Activated T-helper 2 cell treated with anti-CD3 and anti-CD28 coated beads, Interferon-gamma antibody, Interleukin-2, Interleukin-4, amounts not matched to agents 10 μg/mL and 5 μg/mL and 100 μg/mL, durations not matched to agents 14 hours and 24 hours and 36 hours (primary cell): ENCODE measurements at regions of chr3 and their contacts with region 1.

Region 1: DNA sequence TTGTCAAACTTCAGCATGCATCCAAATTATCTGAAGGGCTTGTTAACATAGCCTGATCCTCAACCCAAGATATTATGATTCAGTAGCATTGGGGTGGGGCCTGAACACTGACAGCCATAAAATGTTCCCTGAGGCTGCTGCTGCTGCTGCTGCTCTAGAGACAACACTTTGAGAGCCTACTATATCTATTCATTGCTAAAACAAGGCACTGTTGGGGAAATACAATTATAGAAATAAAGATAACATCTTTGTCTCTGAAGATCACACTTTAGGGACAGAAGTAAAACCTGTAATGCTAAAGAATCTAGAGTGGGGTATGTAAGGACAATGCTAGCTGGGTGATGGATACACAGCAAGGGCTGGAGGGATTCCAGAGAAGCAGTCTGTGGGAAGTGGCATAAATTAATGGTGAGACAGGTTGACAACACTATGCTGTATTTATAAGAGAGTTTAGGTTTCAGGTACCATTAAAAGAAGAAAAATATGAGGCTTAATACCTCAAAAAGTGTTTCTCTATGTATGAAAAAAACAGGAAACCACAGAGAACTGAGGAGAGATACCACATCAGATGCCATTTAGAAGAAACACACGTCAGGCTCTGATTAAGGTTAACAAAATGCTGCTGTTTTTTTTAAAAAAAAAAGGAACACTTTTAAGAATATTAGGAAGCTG is 115.9 kb downstream of the CBLB start:
- DNase-seq: peak; percentile 39
- H3K4me3 Mint-ChIP-seq: peak overlapping the region; percentile 48
- H3K27ac Mint-ChIP-seq: peak overlapping the region; percentile 95
- H3K4me1 Mint-ChIP-seq: peaks cover 70% of the 10 kb centered on the region
- H3K27me3 Mint-ChIP-seq: no peaks in the 10 kb centered on the region

Region 2: DNA sequence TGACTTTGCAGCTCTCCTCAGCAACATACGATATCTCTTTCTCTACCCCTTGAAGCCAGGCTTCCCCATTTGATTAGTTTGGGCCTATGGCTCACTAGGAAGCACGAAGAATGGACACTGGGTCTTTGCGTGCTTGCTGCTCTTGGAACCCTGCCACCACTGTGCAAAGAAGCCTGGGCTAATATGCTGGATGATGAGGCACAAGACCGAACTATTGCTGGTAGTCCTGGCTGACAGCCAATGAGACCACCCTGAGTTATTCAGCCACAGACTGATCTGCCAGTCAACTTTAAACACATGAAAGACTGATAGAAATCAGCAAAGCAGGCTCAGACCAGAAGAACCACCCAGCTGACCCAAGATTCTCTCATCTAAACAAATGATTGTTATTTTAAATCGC is 134.3 kb before region 1 on chr3:
- intact Hi-C with region 1: no loop called
- DNase-seq: no peak
- H3K4me3 Mint-ChIP-seq: no peak overlapping the region
- H3K27ac Mint-ChIP-seq: no peak overlapping the region
- H3K4me1 Mint-ChIP-seq: no peaks in the 10 kb centered on the region
- H3K27me3 Mint-ChIP-seq: no peaks in the 10 kb centered on the region

Region 3: GRCh38 chr3:105676621-105677300 is 76.1 kb before region 1 on chr3:
- intact Hi-C with region 1: loop called (anchors 1 kb)
- DNase-seq: no peak
- H3K4me3 Mint-ChIP-seq: no peak overlapping the region
- H3K27ac Mint-ChIP-seq: peak overlapping the region; percentile 74
- H3K4me1 Mint-ChIP-seq: peaks cover 23% of the 10 kb centered on the region
- H3K27me3 Mint-ChIP-seq: no peaks in the 10 kb centered on the region

Region 4: GRCh38 chr3:105704726-105705410 is 48.0 kb before region 1 on chr3:
- intact Hi-C with region 1: no loop called
- DNase-seq: no peak
- H3K4me3 Mint-ChIP-seq: no peak overlapping the region
- H3K27ac Mint-ChIP-seq: no peak overlapping the region
- H3K4me1 Mint-ChIP-seq: peaks cover 19% of the 10 kb centered on the region
- H3K27me3 Mint-ChIP-seq: no peaks in the 10 kb centered on the region

Region 5: DNA sequence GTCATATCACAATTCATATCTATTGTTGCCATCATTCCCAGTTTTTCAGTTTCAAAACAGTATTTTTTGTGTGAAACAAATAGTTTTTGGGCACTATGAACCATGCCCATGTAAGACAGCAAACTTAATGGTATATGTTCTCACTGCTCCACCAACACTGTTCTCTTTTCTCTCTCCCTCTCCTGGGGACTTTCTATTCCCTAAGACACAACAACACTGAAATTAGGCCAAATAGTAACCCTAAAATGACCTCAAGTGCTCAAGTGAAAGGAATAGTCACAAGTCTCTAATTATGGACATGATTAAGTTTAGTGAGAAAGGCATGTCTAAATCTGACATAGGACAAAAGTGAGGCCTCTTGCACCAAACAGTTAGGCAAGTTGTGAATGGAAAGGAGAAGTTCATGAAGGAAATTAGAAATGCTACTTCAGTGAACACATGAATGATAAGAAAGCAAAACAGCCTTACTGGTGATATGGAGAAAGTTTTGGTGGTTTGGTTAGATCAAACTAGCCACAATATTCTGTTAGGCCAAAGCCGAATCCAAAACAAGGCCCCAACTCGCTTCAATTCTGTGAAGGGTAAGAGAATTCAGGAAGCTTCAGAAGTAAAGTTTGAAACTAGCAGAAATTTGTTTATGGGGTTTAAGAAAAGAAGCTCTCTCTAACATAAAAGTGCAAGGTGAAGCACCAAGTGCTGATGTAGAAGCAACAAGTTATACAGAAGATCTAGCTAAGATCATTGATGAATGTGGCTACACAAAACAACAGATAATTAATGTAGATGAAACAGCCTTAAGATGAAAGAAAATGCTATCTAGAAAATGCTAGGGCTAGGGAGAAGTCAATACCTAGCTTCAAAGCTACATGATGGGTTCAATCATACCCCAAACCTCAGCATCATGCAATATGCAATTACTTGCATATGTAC is 11.8 kb after region 1 on chr3:
- intact Hi-C with region 1: loop called (anchors 1 kb)
- DNase-seq: no peak
- H3K4me3 Mint-ChIP-seq: peak overlapping the region; percentile 55
- H3K27ac Mint-ChIP-seq: peak overlapping the region; percentile 92
- H3K4me1 Mint-ChIP-seq: peaks cover 58% of the 10 kb centered on the region
- H3K27me3 Mint-ChIP-seq: no peaks in the 10 kb centered on the region

Region 6: GRCh38 chr3:105774444-105775180 is 21.7 kb after region 1 on chr3:
- intact Hi-C with region 1: loop called (anchors 1 kb)
- DNase-seq: no peak
- H3K4me3 Mint-ChIP-seq: peak overlapping the region; percentile 38
- H3K27ac Mint-ChIP-seq: peak overlapping the region; percentile 81
- H3K4me1 Mint-ChIP-seq: peaks cover 65% of the 10 kb centered on the region
- H3K27me3 Mint-ChIP-seq: no peaks in the 10 kb centered on the region

Region 7: GRCh38 chr3:105806361-105806760 is 53.5 kb after region 1 on chr3:
- intact Hi-C with region 1: loop called (anchors 2 kb)
- DNase-seq: no peak
- H3K4me3 Mint-ChIP-seq: no peak overlapping the region
- H3K27ac Mint-ChIP-seq: peak overlapping the region; percentile 68
- H3K4me1 Mint-ChIP-seq: peaks cover 66% of the 10 kb centered on the region
- H3K27me3 Mint-ChIP-seq: no peaks in the 10 kb centered on the region